HCT116 (cell line): ENCODE measurements at regions of chr14 and their contacts with region 1.

Region 1: GRCh38 chr14:74860906-74861733 is 14.8 kb downstream of the PROX2 start:
- DNase-seq: peak; percentile 69
- ATAC-seq: peak; percentile 95
- H3K4me3 ChIP-seq: no peak overlapping the region
- H3K27ac ChIP-seq: no peak overlapping the region
- H3K4me1 ChIP-seq: peaks cover 0 to 4% of the 10 kb centered on the region in 2 experiments; a peak in 1 of 4 replicates
- H3K27me3 ChIP-seq: no peaks in the 10 kb centered on the region
- CTCF ChIP-seq: peak; percentile 78 to 92 (median 89)
- POLR2A ChIP-seq: no peak
- RAD21 ChIP-seq: peak; percentile 90

Region 2: GRCh38 chr14:74608959-74609611 is 252.0 kb before region 1 on chr14:
- CTCF ChIA-PET with region 1: interaction called, 13 read pairs
- POLR2A ChIA-PET with region 1: no interaction called
- RAD21 ChIA-PET with region 1: interaction called in 1 of 2 experiments, 3 read pairs
- intact Hi-C with region 1: no loop called
- DNase-seq: peak; percentile 79
- ATAC-seq: peak; percentile 70
- H3K4me3 ChIP-seq: no peak overlapping the region
- H3K27ac ChIP-seq: no peak overlapping the region
- H3K4me1 ChIP-seq: peaks cover 0 to 15% of the 10 kb centered on the region in 2 experiments; a peak in 1 of 4 replicates
- H3K27me3 ChIP-seq: no peaks in the 10 kb centered on the region
- CTCF ChIP-seq: peak in 2 of 3 experiments; percentile 98; a peak in 4 of 6 replicates
- POLR2A ChIP-seq: no peak
- RAD21 ChIP-seq: no peak

Region 3: GRCh38 chr14:74881431-74882361 is 20.6 kb after region 1 on chr14 and contains the start of gene DLST:
- CTCF ChIA-PET with region 1: interaction called, 27 read pairs
- POLR2A ChIA-PET with region 1: no interaction called
- RAD21 ChIA-PET with region 1: interaction called in 1 of 2 experiments, 3 read pairs
- intact Hi-C with region 1: no loop called
- DNase-seq: peak; percentile 71
- ATAC-seq: peak; percentile 92
- H3K4me3 ChIP-seq: peak within 1 kb of the TSS; percentile 73 to 95
- H3K27ac ChIP-seq: peak within 1 kb of the TSS; percentile 83
- H3K4me1 ChIP-seq: peaks cover 16 to 17% of the 10 kb centered on the region in 2 experiments
- H3K27me3 ChIP-seq: no peaks in the 10 kb centered on the region
- CTCF ChIP-seq: no peak
- POLR2A ChIP-seq: peak; percentile 90
- RAD21 ChIP-seq: no peak
- total RNA-seq, gene DLST: 101 TPM

Region 4: DNA sequence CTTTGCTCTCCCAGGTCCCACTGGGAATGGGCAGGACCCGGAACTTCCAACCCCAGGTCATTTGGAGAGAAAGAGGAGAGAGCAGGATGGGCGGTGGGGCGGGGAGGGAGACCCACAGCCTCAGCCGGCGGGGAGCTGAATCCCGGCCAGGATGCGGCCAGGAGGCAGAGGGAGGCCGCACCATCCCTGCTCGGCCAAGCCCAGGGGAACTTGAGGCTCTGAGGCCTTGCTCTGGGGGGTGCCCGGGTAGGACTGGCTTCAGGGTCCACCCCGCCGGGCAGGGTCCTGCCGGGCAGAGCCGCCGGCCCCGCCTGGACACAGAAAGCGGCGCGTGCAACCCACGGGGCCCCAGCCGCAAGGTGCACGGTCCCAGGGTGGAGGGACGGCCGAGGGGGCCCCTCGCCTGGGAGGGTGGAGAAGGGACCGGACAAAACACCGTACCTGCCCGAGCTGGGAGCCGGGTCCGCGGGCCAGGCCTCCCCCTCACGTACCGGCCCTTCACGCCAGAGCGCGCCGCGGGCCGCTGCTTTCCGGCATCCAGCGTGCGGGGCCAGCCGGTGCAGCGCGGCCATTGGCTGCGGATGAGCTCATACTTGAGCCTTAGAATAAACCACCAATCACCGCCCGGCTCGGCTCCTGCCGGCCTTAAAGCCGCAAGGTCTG is 61.8 kb after region 1 on chr14 and contains the start of gene RPS6KL1:
- CTCF ChIA-PET with region 1: interaction called, 11 read pairs
- POLR2A ChIA-PET with region 1: no interaction called
- RAD21 ChIA-PET with region 1: interaction called in 1 of 2 experiments, 3 read pairs
- intact Hi-C with region 1: no loop called
- DNase-seq: peak; percentile 68
- ATAC-seq: peak; percentile 98
- H3K4me3 ChIP-seq: peak within 1 kb of the TSS; percentile 74 to 90
- H3K27ac ChIP-seq: no peak within 1 kb of the TSS
- H3K4me1 ChIP-seq: peaks cover 0 to 12% of the 10 kb centered on the region in 2 experiments; a peak in 2 of 4 replicates
- H3K27me3 ChIP-seq: no peaks in the 10 kb centered on the region
- CTCF ChIP-seq: no peak
- POLR2A ChIP-seq: no peak
- RAD21 ChIP-seq: no peak
- total RNA-seq, gene RPS6KL1: 6.7 TPM

Region 5: DNA sequence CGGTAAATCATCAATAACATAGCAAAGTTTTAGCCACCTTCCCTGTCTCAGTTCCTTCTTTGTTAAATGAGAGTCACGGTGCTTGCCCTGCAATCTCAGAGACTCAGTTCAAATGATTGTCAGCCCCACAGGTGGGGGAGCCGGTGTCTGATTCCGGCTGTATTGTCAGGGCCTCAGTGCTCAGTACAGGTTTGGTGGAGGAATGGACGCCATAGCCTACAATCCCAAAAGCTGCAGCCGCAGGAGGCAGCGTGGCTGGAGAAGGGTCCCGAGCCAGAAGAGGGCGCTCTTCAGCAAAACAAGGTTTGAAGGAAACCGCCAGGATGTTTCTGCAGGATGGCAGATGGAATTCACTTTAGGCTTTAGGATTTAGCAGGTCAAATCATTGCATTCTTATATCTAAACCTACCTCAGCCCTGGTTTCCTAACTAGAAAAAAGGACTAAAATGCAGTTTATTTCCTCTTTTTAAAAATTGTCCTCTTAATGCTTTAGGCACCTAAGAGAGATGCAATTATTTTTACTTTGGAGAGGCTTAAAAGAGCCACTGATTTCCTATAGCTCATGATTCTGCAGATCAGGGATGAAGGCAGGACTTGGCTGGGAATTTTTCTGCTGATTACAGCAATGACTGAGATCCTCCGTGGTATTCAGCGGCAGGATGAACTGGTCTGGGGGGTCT is 446.7 kb after region 1 on chr14:
- CTCF ChIA-PET with region 1: interaction called, 4 read pairs
- POLR2A ChIA-PET with region 1: no interaction called
- RAD21 ChIA-PET with region 1: no interaction called
- intact Hi-C with region 1: loop called (anchors 2 kb)
- DNase-seq: peak; percentile 69
- ATAC-seq: peak; percentile 85
- H3K4me3 ChIP-seq: no peak overlapping the region
- H3K27ac ChIP-seq: no peak overlapping the region
- H3K4me1 ChIP-seq: peaks cover 0 to 8% of the 10 kb centered on the region in 2 experiments; a peak in 2 of 4 replicates
- H3K27me3 ChIP-seq: no peaks in the 10 kb centered on the region
- CTCF ChIP-seq: peak; percentile 86 to 94 (median 94)
- POLR2A ChIP-seq: no peak
- RAD21 ChIP-seq: peak; percentile 96